Sigmoid colon (tissue), 7 donors: ENCODE measurements at regions of chr3 and their contacts with region 1.

Region 1: GRCh38 chr3:183635431-183636220 is at the start of gene KLHL24:
- DNase-seq: peak; percentile 96
- H3K4me3 ChIP-seq: peak within 1 kb of the TSS; percentile 84 to 95 (median 92)
- H3K27ac ChIP-seq: peak within 1 kb of the TSS; percentile 95 to 98 (median 96)
- H3K4me1 ChIP-seq: peaks cover 0 to 37% (median 30%) of the 10 kb centered on the region in 4 donors
- H3K27me3 ChIP-seq: no peaks in the 10 kb centered on the region
- CTCF ChIP-seq: no peak
- EP300 ChIP-seq: no peak
- POLR2A ChIP-seq: peak; percentile 98 to 99
- total RNA-seq, gene KLHL24: 144 to 201 (median 171) TPM

Region 2: GRCh38 chr3:183584246-183584913 is 51.2 kb before region 1 on chr3:
- intact Hi-C with region 1: loop called (anchors 5 kb)
- DNase-seq: peak; percentile 82
- H3K4me3 ChIP-seq: no peak overlapping the region
- H3K27ac ChIP-seq: peak overlapping the region; percentile 59 to 77 (median 70)
- H3K4me1 ChIP-seq: peaks cover 0 to 34% (median 23%) of the 10 kb centered on the region in 4 donors
- H3K27me3 ChIP-seq: no peaks in the 10 kb centered on the region
- CTCF ChIP-seq: no peak
- EP300 ChIP-seq: no peak
- POLR2A ChIP-seq: no peak

Region 3: GRCh38 chr3:183697610-183698317 is 62.1 kb after region 1 on chr3 and contains the start of gene YEATS2:
- intact Hi-C with region 1: loop called (anchors 2 kb)
- DNase-seq: peak; percentile 68
- H3K4me3 ChIP-seq: peak within 1 kb of the TSS; percentile 88 to 98 (median 97)
- H3K27ac ChIP-seq: peak within 1 kb of the TSS; percentile 93 to 97 (median 94)
- H3K4me1 ChIP-seq: peaks cover 0 to 19% (median 16%) of the 10 kb centered on the region in 4 donors
- H3K27me3 ChIP-seq: no peaks in the 10 kb centered on the region
- CTCF ChIP-seq: no peak
- EP300 ChIP-seq: no peak
- POLR2A ChIP-seq: no peak
- total RNA-seq, gene YEATS2: 13.2 to 20.3 (median 16.3) TPM